ENCODE measurements at regions of chr3 and their contacts with region 1.

Region 1: GRCh38 chr3:136250226-136250902 is at the start of gene PCCB:
- DNase-seq: peak; percentile 99
- H3K4me3 Mint-ChIP-seq: peak within 1 kb of the TSS; percentile 89
- H3K27ac Mint-ChIP-seq: peak within 1 kb of the TSS; percentile 96
- H3K4me1 Mint-ChIP-seq: peaks cover 26% of the 10 kb centered on the region
- H3K27me3 Mint-ChIP-seq: no peaks in the 10 kb centered on the region
- CTCF ChIP-seq: peak; percentile 94
- total RNA-seq, gene PCCB: 52.3 and 63.5 TPM in 2 replicates

Region 2: GRCh38 chr3:135792174-135792573 is 458.2 kb before region 1 on chr3:
- CTCF ChIA-PET with region 1: no interaction called
- intact Hi-C with region 1: no loop called
- DNase-seq: no peak
- H3K4me3 Mint-ChIP-seq: no peak overlapping the region
- H3K27ac Mint-ChIP-seq: no peak overlapping the region
- H3K4me1 Mint-ChIP-seq: no peaks in the 10 kb centered on the region
- H3K27me3 Mint-ChIP-seq: peaks cover 79% of the 10 kb centered on the region
- CTCF ChIP-seq: peak; percentile 25

Region 3: GRCh38 chr3:136142592-136142991 is 107.8 kb before region 1 on chr3:
- CTCF ChIA-PET with region 1: interaction called, 4 read pairs
- intact Hi-C with region 1: loop called (anchors 5 kb)
- DNase-seq: peak; percentile 34
- H3K4me3 Mint-ChIP-seq: no peak overlapping the region
- H3K27ac Mint-ChIP-seq: peak overlapping the region; percentile 65
- H3K4me1 Mint-ChIP-seq: peaks cover 34% of the 10 kb centered on the region
- H3K27me3 Mint-ChIP-seq: no peaks in the 10 kb centered on the region
- CTCF ChIP-seq: no peak

Region 4: DNA sequence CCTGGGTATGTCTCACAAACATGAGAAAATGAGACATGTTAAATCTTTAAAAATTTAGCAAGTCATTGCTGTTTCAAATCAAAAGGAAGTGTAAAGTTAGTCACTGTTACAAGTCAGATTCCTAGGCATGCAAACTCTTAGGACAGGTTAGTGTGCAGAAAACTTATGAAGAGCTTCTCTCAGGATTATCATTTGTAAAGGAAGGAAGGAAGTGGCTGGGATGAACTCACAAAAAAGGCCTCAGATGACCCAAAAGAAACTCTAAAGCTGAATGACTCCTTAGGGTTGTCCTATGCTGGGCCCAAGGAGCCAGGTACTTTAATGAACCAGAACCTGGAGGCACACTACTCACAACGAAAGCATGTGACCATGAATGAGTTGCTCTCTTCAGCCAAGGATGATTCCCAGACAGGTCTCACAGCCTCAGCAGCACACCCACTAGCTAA is 79.2 kb before region 1 on chr3:
- CTCF ChIA-PET with region 1: no interaction called
- intact Hi-C with region 1: no loop called
- DNase-seq: no peak
- H3K4me3 Mint-ChIP-seq: no peak overlapping the region
- H3K27ac Mint-ChIP-seq: peak overlapping the region; percentile 16
- H3K4me1 Mint-ChIP-seq: peaks cover 8% of the 10 kb centered on the region
- H3K27me3 Mint-ChIP-seq: no peaks in the 10 kb centered on the region
- CTCF ChIP-seq: no peak